B cell (primary cell): ENCODE measurements at regions of chr5 and their contacts with region 1.

Region 1: GRCh38 chr5:6262651-6263363 is 115.5 kb downstream of the MED10 start:
- DNase-seq: no peak
- ATAC-seq: no peak
- H3K4me3 ChIP-seq: no peak overlapping the region
- H3K4me3 Mint-ChIP-seq: no peak overlapping the region
- H3K27ac ChIP-seq: no peak overlapping the region
- H3K27ac Mint-ChIP-seq: no peak overlapping the region
- H3K4me1 ChIP-seq: no peaks in the 10 kb centered on the region
- H3K4me1 Mint-ChIP-seq: no peaks in the 10 kb centered on the region
- H3K27me3 ChIP-seq: no peaks in the 10 kb centered on the region
- H3K27me3 Mint-ChIP-seq: peaks cover 10% of the 10 kb centered on the region
- CTCF ChIP-seq: no peak

Region 2: GRCh38 chr5:6236858-6237481 is 25.8 kb before region 1 on chr5:
- CTCF ChIA-PET with region 1: no interaction called
- POLR2A ChIA-PET with region 1: no interaction called
- intact Hi-C with region 1: loop called (anchors 1 kb)
- DNase-seq: peak; percentile 11
- ATAC-seq: no peak
- H3K4me3 ChIP-seq: no peak overlapping the region
- H3K4me3 Mint-ChIP-seq: no peak overlapping the region
- H3K27ac ChIP-seq: no peak overlapping the region
- H3K27ac Mint-ChIP-seq: no peak overlapping the region
- H3K4me1 ChIP-seq: no peaks in the 10 kb centered on the region
- H3K4me1 Mint-ChIP-seq: no peaks in the 10 kb centered on the region
- H3K27me3 ChIP-seq: no peaks in the 10 kb centered on the region
- H3K27me3 Mint-ChIP-seq: peaks cover 4% of the 10 kb centered on the region
- CTCF ChIP-seq: no peak

Region 3: DNA sequence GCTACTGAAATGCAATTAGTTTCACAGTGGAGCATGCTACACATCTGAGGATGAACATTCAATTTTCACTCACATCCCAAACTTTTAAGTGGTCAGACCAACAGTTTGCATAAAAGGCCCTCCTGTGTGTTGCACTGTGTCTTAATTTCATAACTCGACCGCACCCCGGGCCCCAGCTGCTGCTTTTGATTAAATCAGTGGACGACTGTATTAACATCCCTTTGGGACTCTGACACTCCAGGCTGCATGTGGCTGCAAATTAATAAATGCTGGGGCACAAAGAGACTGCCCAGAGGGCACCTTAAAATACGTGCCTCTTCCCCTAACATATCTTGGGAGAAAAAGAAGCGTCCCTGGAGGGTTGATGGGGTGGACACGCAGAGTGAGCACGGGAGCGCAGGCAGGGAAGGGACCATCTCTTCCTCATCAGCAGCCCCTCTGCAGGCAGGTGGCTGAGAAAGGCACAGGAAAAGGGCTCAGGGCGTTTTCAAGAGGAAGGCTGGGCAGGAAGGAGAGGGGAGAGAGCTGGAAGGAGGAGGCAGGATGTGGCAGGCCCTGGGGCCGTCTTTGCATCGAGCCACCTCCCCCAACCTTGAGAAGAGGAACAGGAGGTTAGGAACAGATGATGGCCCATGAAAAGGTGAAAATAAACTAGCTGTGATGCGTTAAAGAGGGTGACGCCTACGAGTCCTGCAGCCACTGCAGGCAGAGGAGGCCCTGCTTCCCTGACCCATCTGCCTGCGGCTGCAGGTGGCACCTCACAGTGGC is 96.9 kb after region 1 on chr5:
- CTCF ChIA-PET with region 1: no interaction called
- POLR2A ChIA-PET with region 1: no interaction called
- intact Hi-C with region 1: no loop called
- DNase-seq: peak; percentile 21
- ATAC-seq: peak; percentile 60
- H3K4me3 ChIP-seq: no peak overlapping the region
- H3K4me3 Mint-ChIP-seq: peak overlapping the region; percentile 49
- H3K27ac ChIP-seq: peak overlapping the region in 1 of 2 donors; percentile 16
- H3K27ac Mint-ChIP-seq: peak overlapping the region; percentile 82
- H3K4me1 ChIP-seq: peaks cover 12 to 15% of the 10 kb centered on the region in 2 donors
- H3K4me1 Mint-ChIP-seq: peaks cover 13% of the 10 kb centered on the region
- H3K27me3 ChIP-seq: no peaks in the 10 kb centered on the region
- H3K27me3 Mint-ChIP-seq: no peaks in the 10 kb centered on the region
- CTCF ChIP-seq: no peak